ENCODE measurements at regions of chrX and their contacts with region 1.

Region 1: GRCh38 chrX:14029425-14030173 is at the start of gene GEMIN8:
- DNase-seq: peak; percentile 82 to 94 (median 82)
- ATAC-seq: peak; percentile 96
- H3K4me3 ChIP-seq: peak within 1 kb of the TSS; percentile 52
- H3K27ac ChIP-seq: peak within 1 kb of the TSS; percentile 85
- H3K4me1 ChIP-seq: peaks cover 4 to 14% of the 10 kb centered on the region in 2 experiments; a peak in 4 of 5 replicates
- H3K27me3 ChIP-seq: no peaks in the 10 kb centered on the region
- CTCF ChIP-seq: no peak
- EP300 ChIP-seq: no peak
- POLR2A ChIP-seq: peak; percentile 74
- RAD21 ChIP-seq: no peak
- polyA plus RNA-seq, gene GEMIN8: 16.9 to 23.8 TPM

Region 2: DNA sequence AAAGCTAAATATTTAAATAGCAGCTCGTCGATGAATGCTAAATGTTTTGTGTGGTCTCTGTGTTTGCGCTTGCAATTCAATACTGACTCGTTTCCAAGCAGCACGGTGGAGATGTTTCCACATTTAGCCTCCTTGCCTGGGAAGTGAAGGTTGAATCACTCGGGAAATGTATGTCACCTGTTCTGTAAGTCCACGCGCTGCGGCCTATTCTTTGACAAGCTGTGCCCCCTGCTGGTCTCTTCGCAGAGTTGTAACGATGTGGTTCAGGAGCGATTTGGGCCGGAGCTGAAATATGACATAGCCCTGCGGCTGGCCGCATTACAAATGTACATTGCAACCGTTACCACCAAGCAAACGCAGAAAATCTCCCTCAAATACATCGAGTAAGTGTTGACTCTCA is 1328.0 kb before region 1 on chrX:
- CTCF ChIA-PET with region 1: no interaction called
- POLR2A ChIA-PET with region 1: no interaction called
- in situ Hi-C with region 1: no loop called
- intact Hi-C with region 1: loop called (anchors 5 kb)
- DNase-seq: peak; percentile 58 to 78 (median 63)
- ATAC-seq: peak; percentile 100
- H3K4me3 ChIP-seq: no peak overlapping the region
- H3K27ac ChIP-seq: no peak overlapping the region
- H3K4me1 ChIP-seq: no peaks in the 10 kb centered on the region
- H3K27me3 ChIP-seq: no peaks in the 10 kb centered on the region; a peak in 1 of 5 replicates
- CTCF ChIP-seq: peak; percentile 71 to 76 (median 76)
- EP300 ChIP-seq: no peak
- POLR2A ChIP-seq: no peak
- RAD21 ChIP-seq: peak; percentile 61 to 78

Region 3: DNA sequence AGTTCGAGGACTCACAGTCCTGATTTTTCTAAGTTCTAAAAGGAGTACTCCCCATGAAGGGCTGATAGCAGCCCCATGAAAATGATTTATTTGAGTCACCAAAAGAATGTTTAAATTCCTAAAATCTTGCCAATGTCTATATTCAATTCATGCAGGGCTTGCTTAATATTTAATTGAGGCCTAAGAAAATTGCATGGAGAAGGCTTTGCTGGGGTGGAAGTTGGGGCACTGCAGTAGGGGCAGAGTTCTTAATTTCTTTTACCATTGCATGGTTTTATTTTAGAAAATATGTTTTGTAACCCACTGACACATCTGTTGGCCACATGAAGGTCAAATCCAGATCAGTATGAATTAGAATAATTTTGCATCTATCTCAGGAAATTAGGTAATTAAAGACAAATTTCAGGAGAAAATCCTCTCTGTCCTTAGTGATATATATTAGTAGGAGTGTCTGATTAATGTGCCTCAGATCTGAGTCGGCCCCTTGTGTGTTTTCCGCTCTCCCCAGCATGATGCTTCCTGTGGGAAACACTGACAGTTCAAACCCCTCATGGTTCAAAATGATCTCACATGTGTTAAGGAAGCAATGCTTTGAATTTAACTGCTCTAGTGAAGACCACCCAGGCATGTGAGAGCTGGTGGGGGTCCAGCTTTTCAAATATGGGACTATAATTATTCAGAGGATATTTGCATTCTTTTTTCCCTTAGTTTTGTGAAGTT is 514.2 kb before region 1 on chrX:
- CTCF ChIA-PET with region 1: no interaction called
- POLR2A ChIA-PET with region 1: no interaction called
- in situ Hi-C with region 1: loop called (anchors 5 kb)
- intact Hi-C with region 1: no loop called
- DNase-seq: no peak
- ATAC-seq: no peak
- H3K4me3 ChIP-seq: no peak overlapping the region
- H3K27ac ChIP-seq: no peak overlapping the region
- H3K4me1 ChIP-seq: no peaks in the 10 kb centered on the region
- H3K27me3 ChIP-seq: no peaks in the 10 kb centered on the region
- CTCF ChIP-seq: no peak
- EP300 ChIP-seq: no peak
- POLR2A ChIP-seq: no peak
- RAD21 ChIP-seq: no peak

Region 4: GRCh38 chrX:13653022-13653693 is 376.4 kb before region 1 on chrX and contains the start of gene TCEANC:
- CTCF ChIA-PET with region 1: interaction called, 6 read pairs
- POLR2A ChIA-PET with region 1: no interaction called
- in situ Hi-C with region 1: loop called (anchors 5 kb)
- intact Hi-C with region 1: loop called (anchors 1 kb)
- DNase-seq: peak; percentile 92 to 97 (median 93)
- ATAC-seq: peak; percentile 97
- H3K4me3 ChIP-seq: peak within 1 kb of the TSS; percentile 67
- H3K27ac ChIP-seq: peak within 1 kb of the TSS; percentile 82
- H3K4me1 ChIP-seq: peaks cover 8 to 37% of the 10 kb centered on the region in 2 experiments
- H3K27me3 ChIP-seq: no peaks in the 10 kb centered on the region
- CTCF ChIP-seq: no peak
- EP300 ChIP-seq: no peak
- POLR2A ChIP-seq: peak; percentile 86
- RAD21 ChIP-seq: no peak
- polyA plus RNA-seq, gene TCEANC: 2.0 to 2.3 TPM

Region 5: DNA sequence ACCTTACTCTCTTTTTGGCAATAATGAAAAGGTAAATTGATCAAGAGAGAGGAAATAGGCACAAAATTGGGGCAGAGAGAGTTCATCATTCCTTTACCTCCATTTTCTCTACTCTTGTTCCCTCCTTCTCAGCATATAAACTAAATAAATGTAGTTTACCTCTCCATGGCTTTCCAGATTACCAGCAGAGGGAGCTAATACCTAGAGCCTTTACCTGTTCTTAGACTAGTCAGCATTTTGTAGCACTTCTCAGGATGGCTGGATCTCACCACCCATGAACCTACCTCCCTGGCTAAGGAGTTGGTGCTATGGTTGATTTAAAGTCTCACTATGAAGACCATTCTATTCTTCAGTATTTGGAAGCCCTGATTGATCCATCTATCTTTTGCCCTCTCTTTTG is 279.4 kb before region 1 on chrX:
- CTCF ChIA-PET with region 1: interaction called, 3 read pairs
- POLR2A ChIA-PET with region 1: interaction called, 3 read pairs
- in situ Hi-C with region 1: no loop called
- intact Hi-C with region 1: loop called (anchors 1 kb)
- DNase-seq: peak in 2 of 4 experiments; percentile 25 to 51
- ATAC-seq: peak; percentile 85
- H3K4me3 ChIP-seq: no peak overlapping the region
- H3K27ac ChIP-seq: no peak overlapping the region
- H3K4me1 ChIP-seq: no peaks in the 10 kb centered on the region
- H3K27me3 ChIP-seq: no peaks in the 10 kb centered on the region
- CTCF ChIP-seq: peak; percentile 23 to 62 (median 61); a peak in 5 of 6 replicates
- EP300 ChIP-seq: no peak
- POLR2A ChIP-seq: no peak
- RAD21 ChIP-seq: peak in 1 of 2 experiments; percentile 51; a peak in 2 of 4 replicates

Region 6: GRCh38 chrX:13898083-13898482 is 131.5 kb before region 1 on chrX:
- CTCF ChIA-PET with region 1: interaction called, 5 read pairs
- POLR2A ChIA-PET with region 1: no interaction called
- in situ Hi-C with region 1: no loop called
- intact Hi-C with region 1: loop called (anchors 2 kb)
- DNase-seq: peak in 2 of 4 experiments; percentile 10 to 29
- ATAC-seq: peak; percentile 51; the same call in 2 of the 3 replicates
- H3K4me3 ChIP-seq: no peak overlapping the region
- H3K27ac ChIP-seq: no peak overlapping the region
- H3K4me1 ChIP-seq: no peaks in the 10 kb centered on the region
- H3K27me3 ChIP-seq: no peaks in the 10 kb centered on the region; a peak in 1 of 5 replicates
- CTCF ChIP-seq: peak; percentile 24 to 46 (median 27); a peak in 3 of 6 replicates
- EP300 ChIP-seq: no peak
- POLR2A ChIP-seq: no peak
- RAD21 ChIP-seq: peak in 1 of 2 experiments; percentile 45; a peak in 3 of 4 replicates

Region 7: GRCh38 chrX:14073556-14073955 is 44.0 kb after region 1 on chrX:
- CTCF ChIA-PET with region 1: no interaction called
- POLR2A ChIA-PET with region 1: no interaction called
- in situ Hi-C with region 1: no loop called
- intact Hi-C with region 1: no loop called
- DNase-seq: no peak
- ATAC-seq: no peak
- H3K4me3 ChIP-seq: no peak overlapping the region
- H3K27ac ChIP-seq: no peak overlapping the region
- H3K4me1 ChIP-seq: no peaks in the 10 kb centered on the region; a peak in 1 of 5 replicates
- H3K27me3 ChIP-seq: no peaks in the 10 kb centered on the region
- CTCF ChIP-seq: no peak
- EP300 ChIP-seq: no peak
- POLR2A ChIP-seq: no peak
- RAD21 ChIP-seq: no peak

Region 8: DNA sequence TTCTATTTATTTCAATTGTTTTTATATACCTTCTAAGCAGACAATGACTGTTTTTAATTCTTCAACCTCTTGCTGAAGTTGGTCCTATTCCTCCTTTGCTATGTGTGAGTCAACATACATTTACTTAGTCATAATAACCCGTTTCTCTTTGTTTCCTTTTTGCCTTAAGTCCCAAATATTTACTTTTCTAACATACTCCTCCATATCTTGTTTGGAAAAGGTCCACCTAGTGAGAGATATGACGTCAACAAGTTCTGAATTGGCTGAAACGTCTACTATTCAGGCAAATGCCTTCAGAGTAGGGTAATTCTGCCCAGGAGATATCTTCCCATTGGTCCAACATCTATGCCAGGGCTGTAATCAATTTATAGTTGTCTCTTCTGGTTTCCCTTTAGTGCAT is 179.4 kb after region 1 on chrX:
- CTCF ChIA-PET with region 1: no interaction called
- POLR2A ChIA-PET with region 1: no interaction called
- in situ Hi-C with region 1: no loop called
- intact Hi-C with region 1: no loop called
- DNase-seq: no peak
- ATAC-seq: no peak
- H3K4me3 ChIP-seq: no peak overlapping the region
- H3K27ac ChIP-seq: no peak overlapping the region
- H3K4me1 ChIP-seq: no peaks in the 10 kb centered on the region
- H3K27me3 ChIP-seq: no peaks in the 10 kb centered on the region
- CTCF ChIP-seq: no peak
- EP300 ChIP-seq: no peak
- POLR2A ChIP-seq: no peak
- RAD21 ChIP-seq: no peak

Region 9: GRCh38 chrX:15471016-15471415 is 1441.4 kb after region 1 on chrX:
- CTCF ChIA-PET with region 1: no interaction called
- POLR2A ChIA-PET with region 1: no interaction called
- in situ Hi-C with region 1: no loop called
- intact Hi-C with region 1: loop called (anchors 10 kb)
- DNase-seq: peak; percentile 38 to 81 (median 40)
- ATAC-seq: peak; percentile 98
- H3K4me3 ChIP-seq: no peak overlapping the region
- H3K27ac ChIP-seq: no peak overlapping the region
- H3K4me1 ChIP-seq: peaks cover 0 to 4% of the 10 kb centered on the region in 2 experiments; a peak in 1 of 5 replicates
- H3K27me3 ChIP-seq: no peaks in the 10 kb centered on the region
- CTCF ChIP-seq: peak; percentile 76 to 82 (median 79)
- EP300 ChIP-seq: no peak
- POLR2A ChIP-seq: no peak
- RAD21 ChIP-seq: peak; percentile 84 to 90